Common myeloid progenitor, CD34-positive (primary cell): ENCODE measurements at regions of chr6 and their contacts with region 1.

Region 1: DNA sequence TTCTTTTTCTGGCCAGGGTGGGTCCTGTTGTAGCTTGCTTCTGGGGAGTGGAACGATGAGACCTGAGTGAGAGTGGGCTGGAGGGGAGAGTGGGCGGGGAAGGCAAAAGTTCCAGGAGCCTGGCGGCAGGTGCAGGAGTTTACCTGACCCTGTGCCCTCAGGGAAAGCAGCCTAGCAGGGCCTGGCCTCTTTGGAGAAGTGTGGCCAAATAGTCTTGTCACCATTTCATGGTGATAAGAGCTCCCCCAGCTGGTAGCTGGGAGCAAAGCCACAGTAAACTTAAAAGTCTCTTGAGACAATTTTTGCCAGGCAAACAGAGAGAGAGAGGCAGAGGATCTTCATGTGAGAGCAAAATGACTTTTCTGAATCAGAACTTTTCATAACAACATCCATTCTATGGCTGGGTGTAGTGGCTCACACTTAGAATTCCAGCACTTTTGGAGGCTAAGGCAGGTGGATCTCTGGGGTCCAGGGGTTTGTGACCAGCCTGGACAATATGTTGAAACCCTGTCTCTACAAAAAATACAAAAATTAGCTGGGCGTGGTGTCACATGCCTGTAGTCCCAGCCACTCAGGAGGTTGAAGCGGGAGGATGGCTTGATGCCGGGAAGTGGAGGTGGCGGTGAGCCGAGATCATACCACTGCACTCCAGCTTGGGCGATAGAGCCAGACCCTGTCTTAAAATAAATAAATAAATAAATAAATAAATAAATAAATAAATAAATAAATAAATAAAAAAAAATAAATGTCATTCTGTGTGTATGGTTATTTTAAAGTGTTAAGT is 161.8 kb upstream of the SCGN start:
- DNase-seq: peak; percentile 84 to 91 (median 87)
- H3K4me3 ChIP-seq: no peak overlapping the region
- H3K27ac ChIP-seq: no peak overlapping the region
- H3K4me1 ChIP-seq: peaks cover 0 to 11% (median 3%) of the 10 kb centered on the region in 4 experiments
- H3K27me3 ChIP-seq: no peaks in the 10 kb centered on the region

Region 2: DNA sequence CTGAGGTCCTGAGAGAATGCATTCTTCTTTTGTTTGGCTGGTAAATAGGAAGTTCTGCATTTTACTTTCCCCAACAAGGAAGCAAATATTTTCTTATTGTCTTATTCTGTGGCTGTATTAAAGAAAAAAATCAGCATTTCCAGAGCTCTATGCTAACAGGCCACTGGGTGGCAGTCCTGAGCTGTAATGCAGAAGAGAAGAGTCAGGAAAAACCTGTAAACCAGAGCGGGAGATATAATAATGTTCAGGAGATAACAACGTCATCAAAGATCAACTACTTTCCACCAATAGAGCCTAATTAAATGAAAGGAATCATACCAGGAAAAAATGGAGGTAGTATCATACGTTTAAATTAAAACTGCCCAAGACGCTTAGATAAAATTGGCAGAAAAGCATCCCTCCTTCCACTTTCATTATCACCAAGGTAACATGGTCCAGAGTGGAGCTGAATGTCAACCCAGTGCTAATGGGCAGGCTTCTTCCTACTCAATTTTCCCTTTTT is 266.7 kb before region 1 on chr6:
- CTCF ChIA-PET with region 1: interaction called, 10 read pairs
- POLR2A ChIA-PET with region 1: no interaction called
- DNase-seq: peak; percentile 73 to 85 (median 79)
- H3K4me3 ChIP-seq: peak overlapping the region in 5 of 7 experiments; percentile 17 to 76 (median 47)
- H3K27ac ChIP-seq: no peak overlapping the region
- H3K4me1 ChIP-seq: peaks cover 5 to 20% (median 9%) of the 10 kb centered on the region in 4 experiments
- H3K27me3 ChIP-seq: no peaks in the 10 kb centered on the region

Region 3: GRCh38 chr6:25278914-25279747 is 211.1 kb before region 1 on chr6 and contains the start of gene CARMIL1:
- CTCF ChIA-PET with region 1: interaction called, 77 read pairs
- POLR2A ChIA-PET with region 1: no interaction called
- DNase-seq: peak; percentile 80 to 93 (median 92)
- H3K4me3 ChIP-seq: peak within 1 kb of the TSS; percentile 71 to 99 (median 84)
- H3K27ac ChIP-seq: peak within 1 kb of the TSS in 1 of 2 experiments; percentile 3
- H3K4me1 ChIP-seq: peaks cover 6 to 38% (median 22%) of the 10 kb centered on the region in 4 experiments
- H3K27me3 ChIP-seq: no peaks in the 10 kb centered on the region

Region 4: GRCh38 chr6:25315194-25316177 is 174.7 kb before region 1 on chr6:
- CTCF ChIA-PET with region 1: no interaction called
- POLR2A ChIA-PET with region 1: no interaction called
- DNase-seq: no peak
- H3K4me3 ChIP-seq: no peak overlapping the region
- H3K27ac ChIP-seq: no peak overlapping the region
- H3K4me1 ChIP-seq: peaks cover 17 to 30% (median 19%) of the 10 kb centered on the region in 4 experiments
- H3K27me3 ChIP-seq: no peaks in the 10 kb centered on the region